WTC11 (cell line): ENCODE measurements at regions of chr20 and their contacts with region 1.

Region 1: GRCh38 chr20:2172305-2173175 is 70.9 kb downstream of the STK35 start:
- DNase-seq: peak; percentile 80
- ATAC-seq: peak; percentile 88
- H3K4me3 Mint-ChIP-seq: peak overlapping the region; percentile 57
- H3K27ac Mint-ChIP-seq: no peak overlapping the region
- H3K4me1 Mint-ChIP-seq: peaks cover 3% of the 10 kb centered on the region; the same call in 1 of the 2 replicates
- H3K27me3 Mint-ChIP-seq: peaks cover 3% of the 10 kb centered on the region; the same call in 1 of the 2 replicates
- CTCF ChIP-seq: peak; percentile 91

Region 2: GRCh38 chr20:1802385-1803060 is 370.0 kb before region 1 on chr20:
- CTCF ChIA-PET with region 1: interaction called, 11 read pairs
- POLR2A ChIA-PET with region 1: no interaction called
- DNase-seq: peak; percentile 79
- ATAC-seq: peak; percentile 73
- H3K4me3 Mint-ChIP-seq: peak overlapping the region; percentile 84
- H3K27ac Mint-ChIP-seq: no peak overlapping the region; the same call in 1 of the 2 replicates
- H3K4me1 Mint-ChIP-seq: peaks cover 41% of the 10 kb centered on the region
- H3K27me3 Mint-ChIP-seq: peaks cover 29% of the 10 kb centered on the region
- CTCF ChIP-seq: no peak

Region 3: DNA sequence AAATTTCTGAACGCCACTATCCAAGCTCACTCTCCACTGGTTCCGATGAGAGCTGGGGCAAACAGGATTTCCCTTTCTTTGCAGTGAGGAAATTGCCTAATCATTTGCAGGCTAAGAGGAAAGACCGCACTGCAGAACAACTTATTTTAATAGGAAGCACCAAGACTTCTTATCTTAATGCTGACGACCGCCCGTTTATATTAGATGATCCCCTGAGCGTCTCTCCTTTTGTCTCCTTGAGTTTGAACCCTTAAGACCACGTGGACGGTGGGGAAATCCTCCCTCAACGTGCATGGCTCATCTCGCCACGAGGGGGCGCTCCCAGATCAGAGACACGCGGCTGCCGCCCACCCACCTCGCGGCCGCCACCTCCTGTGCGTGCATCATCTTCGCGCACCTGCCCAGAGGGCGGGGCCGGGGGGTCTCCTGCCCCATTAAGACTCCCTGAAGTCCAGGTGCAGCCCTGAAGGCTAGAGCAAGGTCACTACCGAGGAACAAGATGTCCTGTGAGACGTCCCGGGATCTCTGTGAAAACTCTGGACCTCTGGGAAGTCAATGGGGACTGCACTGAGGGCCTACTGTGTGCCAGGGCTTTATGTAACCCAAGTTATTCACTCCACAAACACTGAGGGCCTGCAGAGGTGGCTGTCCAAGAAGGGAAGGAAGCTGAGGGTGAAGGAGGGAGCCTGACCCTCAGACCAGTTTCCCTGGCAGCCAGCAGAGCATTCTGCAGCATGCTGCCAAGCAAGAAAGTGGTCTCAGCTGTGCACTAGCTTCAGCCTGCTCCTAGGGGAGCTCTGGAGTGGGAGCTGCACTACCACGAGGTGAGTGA is 206.8 kb before region 1 on chr20:
- CTCF ChIA-PET with region 1: interaction called, 54 read pairs
- POLR2A ChIA-PET with region 1: interaction called, 3 read pairs
- DNase-seq: peak; percentile 89
- ATAC-seq: peak; percentile 70
- H3K4me3 Mint-ChIP-seq: peak overlapping the region; percentile 58
- H3K27ac Mint-ChIP-seq: no peak overlapping the region
- H3K4me1 Mint-ChIP-seq: peaks cover 36% of the 10 kb centered on the region
- H3K27me3 Mint-ChIP-seq: peaks cover 22% of the 10 kb centered on the region
- CTCF ChIP-seq: peak; percentile 89

Region 4: GRCh38 chr20:2093159-2093781 is 79.3 kb before region 1 on chr20:
- CTCF ChIA-PET with region 1: interaction called, 33 read pairs
- POLR2A ChIA-PET with region 1: no interaction called
- DNase-seq: peak; percentile 71
- ATAC-seq: peak; percentile 67
- H3K4me3 Mint-ChIP-seq: no peak overlapping the region
- H3K27ac Mint-ChIP-seq: no peak overlapping the region
- H3K4me1 Mint-ChIP-seq: peaks cover 16% of the 10 kb centered on the region
- H3K27me3 Mint-ChIP-seq: no peaks in the 10 kb centered on the region; the same call in 1 of the 2 replicates
- CTCF ChIP-seq: peak; percentile 47; the same call in 1 of the 2 replicates

Region 5: DNA sequence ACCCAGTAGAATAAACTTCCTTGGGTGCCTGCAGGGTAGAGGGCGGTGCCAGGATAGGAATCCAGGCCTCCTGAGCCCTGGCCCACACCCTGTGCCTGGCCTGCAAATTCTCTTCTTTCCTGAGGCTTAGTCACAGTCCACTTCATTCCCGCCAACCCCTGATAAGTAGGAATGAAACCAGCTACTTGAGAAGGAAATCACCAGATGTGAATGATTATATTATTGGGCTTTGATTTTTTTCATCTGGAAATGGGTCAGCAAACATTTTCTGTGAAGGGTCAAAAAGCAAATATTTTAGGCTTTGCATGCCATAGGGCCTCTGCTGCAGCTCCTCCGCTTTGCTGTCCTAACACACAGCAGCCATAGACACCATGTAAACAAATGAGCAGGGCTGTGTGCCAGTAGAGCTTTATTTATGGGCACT is 20.7 kb before region 1 on chr20:
- CTCF ChIA-PET with region 1: interaction called, 28 read pairs
- POLR2A ChIA-PET with region 1: no interaction called
- DNase-seq: no peak
- ATAC-seq: no peak
- H3K4me3 Mint-ChIP-seq: no peak overlapping the region
- H3K27ac Mint-ChIP-seq: no peak overlapping the region
- H3K4me1 Mint-ChIP-seq: peaks cover 22% of the 10 kb centered on the region
- H3K27me3 Mint-ChIP-seq: no peaks in the 10 kb centered on the region
- CTCF ChIP-seq: no peak

Region 6: GRCh38 chr20:2206957-2207769 is 34.6 kb after region 1 on chr20:
- CTCF ChIA-PET with region 1: interaction called, 18 read pairs
- POLR2A ChIA-PET with region 1: no interaction called
- DNase-seq: peak; percentile 89
- ATAC-seq: peak; percentile 94
- H3K4me3 Mint-ChIP-seq: peak overlapping the region; percentile 76
- H3K27ac Mint-ChIP-seq: no peak overlapping the region
- H3K4me1 Mint-ChIP-seq: no peaks in the 10 kb centered on the region
- H3K27me3 Mint-ChIP-seq: peaks cover 42% of the 10 kb centered on the region
- CTCF ChIP-seq: peak; percentile 57